HCT116 (cell line): ENCODE measurements at regions of chr20 and their contacts with region 1.

Region 1: GRCh38 chr20:32749914-32750637 is 6.8 kb upstream of the COMMD7 start:
- DNase-seq: no peak
- ATAC-seq: no peak
- H3K4me3 ChIP-seq: no peak overlapping the region
- H3K27ac ChIP-seq: no peak overlapping the region
- H3K4me1 ChIP-seq: peaks cover 2 to 33% of the 10 kb centered on the region in 2 experiments
- H3K27me3 ChIP-seq: no peaks in the 10 kb centered on the region
- CTCF ChIP-seq: no peak
- POLR2A ChIP-seq: no peak
- RAD21 ChIP-seq: no peak

Region 2: DNA sequence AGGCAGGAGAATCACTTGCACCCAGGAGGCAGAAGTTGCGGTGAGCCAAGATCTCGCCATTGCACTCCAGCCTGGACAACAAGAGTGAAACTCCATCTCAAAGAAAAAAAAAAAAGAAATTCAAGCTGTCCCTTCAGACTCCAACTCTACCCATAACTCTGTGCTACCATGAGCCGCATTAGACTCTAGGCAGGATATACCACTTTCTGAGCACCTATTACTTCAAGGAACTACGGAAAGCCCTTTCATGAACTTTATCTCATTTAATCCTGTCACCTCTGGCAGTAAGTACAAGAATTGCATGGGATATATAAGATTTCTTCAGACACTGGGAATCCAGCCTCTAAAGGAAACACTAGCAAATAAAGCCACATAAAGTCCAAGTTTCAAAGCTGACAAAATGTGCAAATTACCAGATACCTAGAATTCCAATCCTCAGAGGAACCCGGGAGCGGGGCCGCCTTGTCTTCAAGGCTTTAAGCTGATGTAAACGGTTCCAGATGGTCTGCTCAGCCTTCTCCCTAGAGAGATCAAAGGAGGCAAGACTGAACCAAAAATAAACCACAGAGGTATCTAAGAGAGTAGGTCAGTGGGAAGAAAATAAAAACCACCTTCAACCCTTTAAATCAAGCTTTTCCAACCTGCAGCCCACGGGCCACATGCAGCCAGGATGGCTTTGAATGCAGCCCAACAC is 641.8 kb after region 1 on chr20:
- CTCF ChIA-PET with region 1: no interaction called
- POLR2A ChIA-PET with region 1: no interaction called
- RAD21 ChIA-PET with region 1: no interaction called
- intact Hi-C with region 1: no loop called
- DNase-seq: no peak
- ATAC-seq: no peak
- H3K4me3 ChIP-seq: no peak overlapping the region
- H3K27ac ChIP-seq: no peak overlapping the region
- H3K4me1 ChIP-seq: no peaks in the 10 kb centered on the region
- H3K27me3 ChIP-seq: no peaks in the 10 kb centered on the region
- CTCF ChIP-seq: no peak
- POLR2A ChIP-seq: no peak
- RAD21 ChIP-seq: no peak

Region 3: DNA sequence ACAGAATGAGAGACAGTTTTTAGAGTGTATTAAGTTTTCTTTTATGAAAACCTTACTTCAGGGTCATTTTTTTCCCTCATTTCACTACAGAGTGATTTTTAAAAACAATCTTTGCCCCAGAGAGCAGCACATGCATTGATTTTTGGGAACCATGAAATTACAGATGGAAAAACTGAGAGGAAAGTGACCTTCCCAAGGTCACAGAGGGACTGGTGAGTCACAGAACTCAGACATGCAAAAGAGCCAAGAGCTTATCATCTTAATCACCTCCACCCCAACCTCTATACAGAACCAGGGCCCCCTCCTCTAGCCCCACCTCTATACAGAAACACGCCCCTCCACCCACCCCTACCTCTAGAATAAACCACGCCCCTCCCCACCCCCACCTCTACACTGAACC is 959.3 kb after region 1 on chr20:
- CTCF ChIA-PET with region 1: no interaction called
- POLR2A ChIA-PET with region 1: no interaction called
- RAD21 ChIA-PET with region 1: no interaction called
- intact Hi-C with region 1: loop called (anchors 5 kb)
- DNase-seq: no peak
- ATAC-seq: peak; percentile 70
- H3K4me3 ChIP-seq: no peak overlapping the region
- H3K27ac ChIP-seq: no peak overlapping the region
- H3K4me1 ChIP-seq: peaks cover 4 to 27% of the 10 kb centered on the region in 2 experiments
- H3K27me3 ChIP-seq: no peaks in the 10 kb centered on the region
- CTCF ChIP-seq: no peak
- POLR2A ChIP-seq: no peak
- RAD21 ChIP-seq: no peak